A673 (cell line): ENCODE measurements at regions of chr20 and their contacts with region 1.

Region 1: DNA sequence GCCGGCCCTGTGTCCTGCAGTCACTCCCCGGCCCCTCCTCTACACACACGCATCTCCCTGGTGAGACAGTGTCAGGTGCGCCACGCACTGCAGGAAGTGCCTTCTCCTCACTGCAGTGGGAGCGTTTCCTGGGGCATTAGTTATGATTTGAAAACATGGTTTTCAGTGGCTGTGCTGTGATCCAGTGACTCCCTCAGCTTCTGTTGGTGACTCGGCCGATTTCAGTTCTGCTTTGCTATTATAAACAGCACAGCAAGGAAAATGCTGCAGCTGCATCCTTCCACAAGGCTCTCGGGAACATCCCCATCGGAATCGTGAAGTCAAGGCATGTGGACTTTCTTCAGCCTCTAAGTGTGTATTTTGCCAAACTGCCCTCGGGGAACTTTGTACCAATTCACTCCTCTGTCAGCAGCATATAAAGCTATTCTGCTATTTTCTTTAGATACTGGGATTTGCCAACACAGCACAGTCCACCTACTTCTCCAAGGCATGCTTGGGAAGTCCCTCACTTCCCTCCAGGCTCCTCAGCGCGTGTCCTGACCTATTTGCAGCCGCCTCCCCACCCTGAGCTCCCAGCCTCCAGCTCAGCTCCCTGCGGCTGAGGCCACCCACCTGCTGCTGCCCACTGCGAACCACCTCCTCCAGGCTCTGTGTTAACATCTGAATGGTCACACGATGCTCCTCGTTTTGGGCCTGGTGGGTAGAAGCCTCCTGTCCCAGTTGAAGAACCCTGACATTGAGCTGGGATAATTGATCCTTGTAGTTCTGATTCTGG is 54.5 kb downstream of the GINS1 start:
- DNase-seq: no peak
- H3K4me3 ChIP-seq: no peak overlapping the region
- H3K27ac ChIP-seq: no peak overlapping the region
- H3K4me1 ChIP-seq: no peaks in the 10 kb centered on the region
- H3K27me3 ChIP-seq: no peaks in the 10 kb centered on the region
- CTCF ChIP-seq: no peak

Region 2: DNA sequence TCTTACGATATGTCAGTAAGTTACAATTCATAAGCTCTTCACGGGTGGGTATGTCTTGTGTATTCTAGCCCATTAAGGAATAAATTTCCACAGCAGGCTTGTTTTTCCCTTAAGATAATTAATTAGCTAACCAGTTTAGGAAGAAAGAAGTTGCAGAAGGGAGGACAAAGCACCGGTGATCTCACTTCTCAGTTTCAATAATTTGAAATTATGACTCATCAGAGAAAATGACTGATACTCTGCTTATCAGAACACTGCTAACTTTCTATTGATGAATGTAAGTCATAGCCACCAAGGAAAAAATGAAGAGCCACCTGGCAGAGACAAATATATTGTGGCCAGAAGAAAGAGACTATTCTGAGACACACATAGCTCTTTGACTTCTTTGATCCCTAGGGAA is 301.5 kb before region 1 on chr20:
- CTCF ChIA-PET with region 1: no interaction called
- POLR2A ChIA-PET with region 1: no interaction called
- intact Hi-C with region 1: no loop called
- DNase-seq: no peak
- H3K4me3 ChIP-seq: no peak overlapping the region
- H3K27ac ChIP-seq: no peak overlapping the region
- H3K4me1 ChIP-seq: no peaks in the 10 kb centered on the region
- H3K27me3 ChIP-seq: peaks cover 11% of the 10 kb centered on the region
- CTCF ChIP-seq: no peak

Region 3: GRCh38 chr20:25525295-25526266 is 63.6 kb after region 1 on chr20:
- CTCF ChIA-PET with region 1: no interaction called
- POLR2A ChIA-PET with region 1: no interaction called
- intact Hi-C with region 1: loop called (anchors 10 kb)
- DNase-seq: no peak
- H3K4me3 ChIP-seq: no peak overlapping the region
- H3K27ac ChIP-seq: no peak overlapping the region
- H3K4me1 ChIP-seq: no peaks in the 10 kb centered on the region
- H3K27me3 ChIP-seq: no peaks in the 10 kb centered on the region
- CTCF ChIP-seq: no peak